ENCODE measurements at regions of chr7 and their contacts with region 1.

Region 1: GRCh38 chr7:155738652-155739537 is 73.4 kb downstream of the SHH start:
- DNase-seq: peak; percentile 84

Region 2: DNA sequence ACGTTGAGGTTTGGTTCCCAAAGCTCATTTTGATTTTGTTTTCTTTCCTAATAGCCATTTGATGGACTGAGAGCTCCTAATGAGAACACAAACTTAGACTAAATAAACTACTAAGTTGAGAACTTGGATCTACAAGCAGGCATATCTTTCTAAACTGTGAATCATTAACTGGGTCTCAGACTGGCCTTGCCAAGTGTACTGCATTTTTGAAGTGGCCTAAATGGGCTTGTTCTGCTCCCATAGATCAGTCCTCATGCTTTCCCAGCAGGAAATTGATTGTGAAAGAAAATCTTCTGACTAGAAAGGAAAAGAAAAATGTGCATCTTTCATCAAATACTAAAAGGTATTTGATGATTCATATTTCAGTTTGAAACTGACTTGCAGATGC is 141.1 kb before region 1 on chr7:
- intact Hi-C with region 1: loop called (anchors 2 kb)
- DNase-seq: no peak

Region 3: DNA sequence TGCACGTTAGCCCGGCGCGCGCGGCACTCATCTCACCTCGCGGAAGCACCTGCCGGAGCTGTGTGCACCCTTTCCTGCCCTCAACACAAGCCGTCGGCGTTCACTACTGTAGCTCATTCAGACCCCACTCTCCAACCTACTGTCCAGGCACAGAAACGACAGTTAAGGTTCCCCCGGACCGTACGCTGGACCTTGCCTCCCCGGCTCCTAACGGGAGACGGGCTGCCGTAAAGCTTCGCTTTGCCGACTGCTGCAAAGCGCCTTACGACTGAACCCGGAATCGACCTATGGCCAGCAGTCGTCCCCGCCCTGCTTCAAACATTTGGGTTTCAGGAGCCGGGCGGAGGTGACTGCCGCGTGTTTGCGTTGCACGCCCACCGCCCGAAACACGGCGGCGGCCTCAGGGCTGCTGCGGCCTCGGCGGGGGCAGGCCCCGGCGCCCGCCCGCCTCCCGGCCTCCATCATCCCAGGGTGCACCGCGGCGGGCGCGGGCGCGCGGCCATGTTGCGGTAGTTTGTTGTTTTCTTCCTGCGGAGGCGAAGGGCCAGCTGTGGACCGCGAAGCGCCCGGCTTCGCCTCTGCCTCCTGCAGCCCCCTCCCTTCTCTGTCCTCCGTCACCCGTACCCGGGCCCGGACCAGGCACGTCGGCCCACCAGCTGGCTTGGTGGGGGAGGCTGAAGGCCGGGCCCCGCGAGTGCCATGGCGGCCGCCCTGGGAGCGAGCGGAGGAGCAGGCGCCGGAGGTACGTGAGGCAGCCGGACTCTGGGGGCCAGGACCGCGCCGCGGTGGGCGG is 94.5 kb before region 1 on chr7 and contains the start of gene RBM33:
- intact Hi-C with region 1: loop called (anchors 5 kb)
- DNase-seq: peak; percentile 91
- total RNA-seq, gene RBM33: 41.4 TPM

Region 4: DNA sequence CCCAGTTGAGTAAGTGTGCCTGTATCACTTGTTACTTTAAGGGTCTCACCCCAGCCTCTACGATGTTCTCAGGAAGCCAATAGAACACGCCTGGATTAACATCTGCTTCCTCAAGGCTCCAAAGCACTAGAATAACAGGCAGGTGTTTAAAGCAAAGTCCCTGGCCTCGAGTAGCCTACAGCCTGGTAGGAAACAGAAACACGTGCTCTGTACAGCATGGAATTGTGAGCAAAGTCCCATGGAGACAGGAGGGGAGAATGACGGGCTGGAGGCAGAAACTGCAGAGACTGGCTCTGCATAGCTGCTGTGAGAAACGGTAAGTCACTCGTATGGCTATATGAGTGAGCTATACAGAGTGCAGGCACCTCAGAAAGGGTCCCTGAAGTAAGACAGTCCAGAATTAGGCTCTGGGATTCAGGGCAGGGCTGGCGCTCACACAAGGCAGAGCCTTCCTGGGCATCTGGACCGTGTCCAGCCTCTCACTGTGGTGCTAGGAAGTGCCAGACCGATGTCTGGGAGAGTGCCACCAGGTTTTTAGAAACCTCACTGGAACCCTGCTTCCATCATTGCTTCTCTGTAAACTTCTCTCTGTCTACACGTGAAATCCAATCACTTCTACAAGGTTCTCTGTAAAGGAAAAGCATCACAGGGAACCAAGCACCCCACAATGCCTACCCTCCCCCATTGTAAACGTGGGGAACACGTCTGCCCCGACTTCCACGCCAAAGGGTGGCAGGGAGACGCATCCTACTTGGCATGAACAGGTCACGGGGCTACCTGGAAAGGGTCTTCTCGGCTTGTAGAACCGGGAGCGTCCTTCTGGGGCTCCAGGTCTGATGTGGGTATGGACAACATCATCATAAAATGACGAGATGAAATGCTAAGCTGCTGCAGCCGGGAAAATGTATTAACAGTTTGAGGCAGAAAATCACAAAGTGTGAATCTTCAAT is 112.1 kb after region 1 on chr7:
- intact Hi-C with region 1: no loop called
- DNase-seq: peak; percentile 50